ENCODE measurements at regions of chr5 and their contacts with region 1.

Region 1: GRCh38 chr5:72307968-72308852 is 11.8 kb downstream of the MRPS27 start:
- DNase-seq: peak; percentile 95 to 100 (median 98)

Region 2: DNA sequence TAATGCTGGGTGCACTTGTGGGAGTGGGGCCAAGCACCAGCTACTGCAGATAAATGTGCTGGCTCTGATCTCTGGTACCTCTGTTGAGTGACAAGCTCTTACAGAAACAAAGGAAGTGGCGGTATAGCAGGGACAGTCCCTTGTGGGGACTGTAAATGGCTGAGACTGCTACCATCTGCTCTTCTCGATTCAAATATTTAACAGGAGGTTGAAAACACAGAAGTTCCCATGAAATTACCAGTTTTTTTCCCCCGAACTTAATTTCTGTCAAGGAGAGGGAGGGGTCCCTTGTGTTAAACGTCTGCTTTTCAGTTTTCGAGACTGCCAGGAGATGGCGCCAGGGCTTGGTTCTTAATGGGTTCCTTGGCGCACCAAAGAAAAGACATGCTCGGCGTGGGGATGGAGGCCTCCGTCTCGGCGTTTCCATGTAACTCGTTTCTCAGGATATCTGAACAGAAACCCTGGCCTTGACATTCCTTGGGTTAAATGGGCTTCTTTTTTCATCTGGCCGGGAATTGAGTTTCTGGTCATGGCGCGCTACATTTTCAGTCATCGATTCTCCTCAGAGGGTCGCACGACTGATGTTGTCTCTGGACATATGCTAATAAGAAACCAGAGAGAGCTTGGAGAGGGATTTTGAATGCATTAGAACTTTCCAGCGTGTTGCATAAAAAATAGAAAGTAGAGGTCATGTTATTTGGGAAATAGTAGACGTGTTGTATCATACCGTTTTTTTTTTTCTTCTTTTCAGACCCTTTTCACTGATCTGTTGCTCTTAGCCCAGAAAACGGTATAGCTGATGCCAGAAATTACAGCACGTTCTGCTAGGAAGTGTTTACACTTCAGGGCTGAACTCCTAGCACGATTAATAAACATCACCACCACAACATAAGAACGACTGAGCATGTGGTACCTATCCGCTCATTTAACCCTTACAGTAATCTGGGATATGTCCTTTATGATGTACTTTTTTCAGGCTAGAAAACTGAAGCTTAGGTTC is 525.1 kb before region 1 on chr5:
- intact Hi-C with region 1: loop called (anchors 1 kb)
- DNase-seq: peak; percentile 74 to 97 (median 88)

Region 3: DNA sequence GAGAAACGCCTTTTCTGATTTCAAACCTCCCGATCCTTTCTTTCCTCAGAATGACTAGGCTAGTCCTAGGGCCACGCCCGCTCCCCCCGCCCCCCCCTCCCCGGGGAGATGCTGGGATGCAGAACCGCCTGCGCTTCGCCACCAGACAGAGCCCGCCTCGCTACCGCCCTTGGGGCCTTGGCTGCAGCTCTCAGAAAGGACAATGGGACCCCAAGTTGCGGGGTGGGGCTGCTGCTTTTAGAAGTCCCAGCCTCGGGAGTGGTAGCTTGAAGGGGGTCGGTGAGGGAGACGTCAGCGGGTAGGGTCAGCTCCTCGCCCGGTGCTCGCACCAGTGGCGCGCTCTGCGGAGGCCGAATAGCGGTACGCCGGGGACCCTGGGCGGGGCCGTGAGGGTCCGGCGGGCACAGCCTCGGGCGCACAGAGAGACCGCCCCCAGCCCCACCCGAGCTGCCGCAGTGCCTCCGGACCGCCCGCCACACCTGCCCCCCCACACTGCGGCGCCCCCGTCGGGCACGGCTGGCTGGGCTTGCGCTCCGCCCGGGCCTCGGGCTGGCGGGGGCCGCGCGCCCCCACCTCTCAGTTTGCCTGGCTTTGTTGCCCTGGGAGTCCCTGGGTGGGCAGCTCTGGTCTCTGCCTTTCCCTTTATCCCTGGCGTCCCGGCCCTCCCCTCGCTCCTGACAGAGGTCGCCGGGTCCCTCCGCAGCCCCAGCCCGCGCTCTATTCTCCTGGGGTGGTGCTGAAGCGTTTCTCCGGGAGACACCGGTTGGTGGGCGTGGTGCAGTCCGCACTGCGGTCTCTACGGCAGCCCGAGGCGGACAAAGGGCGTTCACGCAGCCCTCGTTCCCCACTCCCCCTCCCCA is 199.8 kb before region 1 on chr5:
- intact Hi-C with region 1: loop called (anchors 5 kb)
- DNase-seq: peak; percentile 64 to 96 (median 76)

Region 4: GRCh38 chr5:72138943-72139521 is 169.2 kb before region 1 on chr5:
- intact Hi-C with region 1: loop called (anchors 5 kb)
- DNase-seq: no peak

Region 5: DNA sequence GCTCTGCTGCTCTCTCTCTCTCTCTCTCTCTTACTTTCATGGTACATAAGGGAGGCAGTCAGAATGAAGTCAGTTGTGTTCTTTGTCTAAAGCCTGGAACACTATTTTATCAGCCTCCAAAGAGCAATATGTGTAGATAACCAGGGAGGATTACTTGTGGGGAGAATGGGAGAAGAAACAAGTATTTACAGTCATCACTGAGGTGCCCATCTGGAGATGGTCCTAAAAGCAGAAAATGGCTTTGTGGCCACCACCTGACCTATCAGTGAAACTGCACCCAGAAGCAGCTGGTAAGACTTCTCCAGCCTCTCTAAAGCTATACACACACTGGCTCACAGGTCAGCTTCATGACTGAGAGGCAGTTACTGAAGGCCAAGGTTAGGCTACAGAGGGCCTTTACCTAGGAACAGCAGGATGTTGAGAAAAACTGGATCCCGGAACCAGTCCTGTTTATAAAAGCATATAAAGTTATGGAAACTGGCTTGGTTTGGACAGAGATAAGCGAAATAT is 63.3 kb before region 1 on chr5:
- intact Hi-C with region 1: loop called (anchors 5 kb)
- DNase-seq: peak in 4 of 10 donors; percentile 11 to 86 (median 38)